Astrocyte of the cerebellum (primary cell): ENCODE measurements at regions of chr18 and their contacts with region 1.

Region 1: GRCh38 chr18:8835521-8835953 is 130.2 kb downstream of the MTCL1 start:
- DNase-seq: no peak
- H3K4me3 ChIP-seq: no peak overlapping the region
- CTCF ChIP-seq: no peak

Region 2: DNA sequence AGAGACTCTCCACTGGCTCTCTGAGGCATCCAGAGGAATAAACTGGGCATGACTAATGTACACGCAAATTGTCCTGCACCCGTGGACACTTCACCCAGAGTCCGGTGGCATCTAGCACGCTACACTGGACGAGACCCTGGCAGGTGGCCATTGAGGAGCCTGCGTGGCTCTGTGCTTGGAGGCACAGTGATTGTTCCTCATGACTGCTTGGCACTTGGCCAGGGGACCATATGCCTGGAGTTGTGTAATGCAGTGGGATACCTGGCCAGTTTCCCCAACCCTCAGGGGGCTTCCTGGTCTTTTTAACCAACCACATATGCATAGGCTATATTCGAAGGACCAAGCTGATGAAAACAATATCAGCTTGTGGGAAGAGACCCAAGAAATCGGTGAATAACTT is 63.6 kb before region 1 on chr18:
- in situ Hi-C with region 1: no loop called
- DNase-seq: peak; percentile 85
- H3K4me3 ChIP-seq: no peak overlapping the region
- CTCF ChIP-seq: no peak

Region 3: GRCh38 chr18:8870528-8870927 is 35.0 kb after region 1 on chr18:
- in situ Hi-C with region 1: no loop called
- DNase-seq: no peak
- H3K4me3 ChIP-seq: no peak overlapping the region
- CTCF ChIP-seq: no peak

Region 4: DNA sequence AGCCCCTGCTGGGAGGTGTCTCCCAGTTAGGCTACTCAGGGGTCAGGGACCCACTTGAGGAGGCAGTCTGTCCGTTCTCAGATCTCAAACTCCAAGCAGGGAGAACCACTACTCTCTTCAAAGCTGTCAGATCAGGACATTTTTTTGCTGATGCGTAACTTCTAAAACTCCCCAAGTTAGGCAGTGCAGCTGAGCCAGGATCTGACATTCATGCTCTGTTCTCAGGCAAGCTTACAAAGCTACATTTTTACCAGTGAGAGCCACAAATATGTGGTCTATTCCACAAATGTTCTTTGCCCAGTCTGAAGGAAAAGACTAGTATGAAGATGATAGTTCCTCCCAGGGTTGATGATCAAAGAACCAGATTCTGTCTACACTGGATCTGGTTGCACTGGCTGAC is 53.9 kb after region 1 on chr18:
- in situ Hi-C with region 1: loop called (anchors 5 kb)
- DNase-seq: peak; percentile 41
- H3K4me3 ChIP-seq: no peak overlapping the region
- CTCF ChIP-seq: no peak

Region 5: DNA sequence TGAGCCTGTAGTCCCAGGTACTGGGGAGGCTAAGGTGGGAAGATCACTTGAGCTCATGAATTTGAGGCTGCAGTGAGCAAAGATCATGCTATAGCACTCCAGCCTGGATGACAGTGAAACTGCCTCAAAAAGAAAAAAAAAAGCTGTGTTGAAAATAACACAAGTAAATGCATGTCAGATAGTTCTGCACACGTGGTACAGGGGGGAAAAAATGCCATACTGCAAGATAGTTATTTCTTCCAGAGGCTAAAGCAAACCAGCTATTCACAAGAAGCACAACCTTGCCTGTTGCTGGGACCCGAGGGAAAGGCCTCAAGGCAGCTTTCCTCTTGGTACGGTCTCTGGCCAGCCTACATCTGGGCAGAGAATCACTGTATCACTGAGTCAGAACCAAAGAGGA is 87.1 kb after region 1 on chr18:
- in situ Hi-C with region 1: no loop called
- DNase-seq: no peak
- H3K4me3 ChIP-seq: no peak overlapping the region
- CTCF ChIP-seq: no peak